ENCODE measurements at regions of chr17 and their contacts with region 1.

Region 1: DNA sequence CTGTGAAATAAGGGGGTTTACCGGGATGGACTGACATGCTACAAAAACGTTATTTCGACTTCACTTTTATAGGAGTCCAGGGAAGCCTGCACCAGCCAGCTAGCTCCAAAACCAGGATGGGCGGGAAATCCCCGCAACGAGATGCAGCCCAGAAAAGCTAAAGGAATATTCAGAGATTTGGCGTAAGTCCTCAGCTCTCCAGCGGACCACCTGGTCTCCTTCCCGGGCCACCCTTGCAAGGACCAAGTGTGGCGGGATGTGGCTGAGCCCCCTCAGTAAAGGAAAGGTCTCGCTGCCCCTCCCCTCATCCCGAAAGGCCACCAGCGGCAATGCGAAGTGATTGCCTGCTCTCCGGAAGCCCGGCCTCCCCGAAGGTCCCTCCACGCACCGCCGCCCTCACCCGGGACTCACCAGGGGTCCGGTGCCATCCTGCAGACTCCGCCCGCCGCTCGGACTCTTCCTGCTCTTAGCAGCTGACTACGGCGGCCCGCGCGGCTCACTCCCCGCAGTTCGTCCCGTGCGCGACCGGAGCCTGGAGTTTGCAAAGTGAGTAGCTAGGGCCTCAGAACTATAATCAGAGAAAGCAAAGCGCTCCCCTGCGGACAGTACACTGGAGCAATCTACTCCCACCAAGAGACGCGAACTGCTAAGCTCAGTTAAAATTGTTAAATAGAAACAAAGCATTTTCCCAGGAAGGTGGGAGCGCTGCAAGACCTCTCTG is at the start of gene STX8:
- DNase-seq: peak; percentile 91
- ATAC-seq: peak; percentile 79
- H3K4me3 Mint-ChIP-seq: peak within 1 kb of the TSS; percentile 83
- H3K27ac Mint-ChIP-seq: peak within 1 kb of the TSS; percentile 71
- H3K4me1 Mint-ChIP-seq: peaks cover 11% of the 10 kb centered on the region
- H3K27me3 Mint-ChIP-seq: no peaks in the 10 kb centered on the region
- CTCF ChIP-seq: no peak
- total RNA-seq, gene STX8: 59.6 to 71.5 TPM

Region 2: GRCh38 chr17:9587969-9588656 is 12.6 kb after region 1 on chr17:
- CTCF ChIA-PET with region 1: interaction called, 28 read pairs
- POLR2A ChIA-PET with region 1: no interaction called
- intact Hi-C with region 1: no loop called
- DNase-seq: no peak
- ATAC-seq: no peak
- H3K4me3 Mint-ChIP-seq: no peak overlapping the region
- H3K27ac Mint-ChIP-seq: no peak overlapping the region
- H3K4me1 Mint-ChIP-seq: peaks cover 2% of the 10 kb centered on the region
- H3K27me3 Mint-ChIP-seq: no peaks in the 10 kb centered on the region
- CTCF ChIP-seq: no peak

Region 3: DNA sequence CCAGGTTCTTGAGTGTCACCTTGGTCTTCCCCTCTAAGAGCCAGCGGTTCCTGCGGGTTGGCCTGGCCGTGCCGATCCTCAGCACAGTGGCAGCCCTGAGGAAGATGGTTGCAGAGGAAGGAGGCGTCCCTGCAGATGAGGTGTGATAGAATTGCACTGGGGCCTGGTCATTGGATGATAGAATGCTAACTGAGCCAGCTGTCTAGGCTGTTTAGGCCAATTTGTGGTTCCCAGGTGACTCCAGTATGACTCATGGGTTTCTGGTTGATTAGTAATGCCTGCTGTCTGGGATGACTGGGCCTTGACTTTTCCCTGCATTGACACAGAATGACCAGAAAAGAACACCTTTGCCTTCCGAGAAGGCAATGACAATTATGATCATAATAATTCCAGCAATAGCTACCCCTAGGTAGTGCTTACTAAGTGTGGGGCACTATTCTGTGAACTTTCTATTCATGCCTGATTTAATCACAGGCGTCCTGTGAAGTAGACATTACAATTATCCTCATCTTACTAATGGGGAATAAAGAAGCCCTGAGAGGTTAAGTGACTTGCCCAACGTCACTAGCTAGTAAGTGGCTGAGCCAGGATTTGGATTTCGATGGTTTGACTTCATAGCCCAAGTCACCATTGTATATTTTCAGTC is 101.3 kb after region 1 on chr17:
- CTCF ChIA-PET with region 1: interaction called, 24 read pairs
- POLR2A ChIA-PET with region 1: no interaction called
- intact Hi-C with region 1: no loop called
- DNase-seq: peak; percentile 4
- ATAC-seq: peak; percentile 62
- H3K4me3 Mint-ChIP-seq: no peak overlapping the region
- H3K27ac Mint-ChIP-seq: no peak overlapping the region
- H3K4me1 Mint-ChIP-seq: no peaks in the 10 kb centered on the region
- H3K27me3 Mint-ChIP-seq: peaks cover 2% of the 10 kb centered on the region
- CTCF ChIP-seq: no peak